CD14-positive monocyte (primary cell): ENCODE measurements at regions of chr5 and their contacts with region 1.

Region 1: GRCh38 chr5:79020861-79021561 is 35.9 kb upstream of the ARSB start:
- DNase-seq: peak; percentile 38 to 50 (median 42)
- H3K4me3 ChIP-seq: no peak overlapping the region
- H3K4me3 Mint-ChIP-seq: peak overlapping the region; percentile 25 to 59
- H3K27ac ChIP-seq: no peak overlapping the region
- H3K27ac Mint-ChIP-seq: peak overlapping the region in 1 of 7 donors; percentile 46
- H3K4me1 ChIP-seq: peaks cover 0 to 3% of the 10 kb centered on the region in 2 donors
- H3K4me1 Mint-ChIP-seq: peaks cover 16% of the 10 kb centered on the region
- H3K27me3 ChIP-seq: peaks cover 10 to 15% of the 10 kb centered on the region in 2 donors
- H3K27me3 Mint-ChIP-seq: peaks cover 7 to 27% (median 7%) of the 10 kb centered on the region in 3 donors
- CTCF ChIP-seq: peak; percentile 74

Region 2: DNA sequence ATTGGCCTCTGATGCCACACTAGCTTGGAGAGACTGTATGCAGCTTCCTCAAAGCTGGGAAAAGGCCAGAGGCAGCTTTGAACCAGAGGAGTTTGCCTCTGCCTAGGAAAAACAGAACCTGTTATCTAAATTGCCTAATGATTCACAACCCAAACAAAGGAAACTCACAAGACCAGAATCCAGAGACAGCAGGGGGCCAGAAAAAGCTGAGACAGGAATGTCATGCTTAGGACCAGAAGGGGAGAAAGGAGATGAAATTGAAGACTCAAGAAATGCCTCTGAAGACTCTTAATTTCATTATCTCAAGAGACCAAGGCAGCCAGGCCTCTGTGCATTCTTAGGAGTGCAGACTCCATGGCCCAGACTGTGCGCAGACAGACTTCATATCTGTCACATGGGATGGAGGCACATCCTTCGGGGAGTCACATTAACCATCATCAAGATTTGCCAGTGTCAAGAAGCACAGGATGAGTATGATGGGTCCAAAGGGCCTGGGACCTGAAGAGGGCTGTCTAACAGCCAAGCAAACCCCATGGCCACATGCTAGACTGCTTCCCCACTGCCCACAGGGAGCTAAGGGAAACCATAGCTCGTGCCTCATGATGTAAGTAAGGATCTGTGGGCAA is 93.2 kb before region 1 on chr5:
- intact Hi-C with region 1: no loop called
- DNase-seq: no peak
- H3K4me3 ChIP-seq: no peak overlapping the region
- H3K4me3 Mint-ChIP-seq: no peak overlapping the region
- H3K27ac ChIP-seq: no peak overlapping the region
- H3K27ac Mint-ChIP-seq: peak overlapping the region in 4 of 7 donors; percentile 24 to 71 (median 40)
- H3K4me1 ChIP-seq: no peaks in the 10 kb centered on the region
- H3K4me1 Mint-ChIP-seq: no peaks in the 10 kb centered on the region
- H3K27me3 ChIP-seq: no peaks in the 10 kb centered on the region
- H3K27me3 Mint-ChIP-seq: peaks cover 0 to 2% (median 0%) of the 10 kb centered on the region in 3 donors
- CTCF ChIP-seq: no peak

Region 3: DNA sequence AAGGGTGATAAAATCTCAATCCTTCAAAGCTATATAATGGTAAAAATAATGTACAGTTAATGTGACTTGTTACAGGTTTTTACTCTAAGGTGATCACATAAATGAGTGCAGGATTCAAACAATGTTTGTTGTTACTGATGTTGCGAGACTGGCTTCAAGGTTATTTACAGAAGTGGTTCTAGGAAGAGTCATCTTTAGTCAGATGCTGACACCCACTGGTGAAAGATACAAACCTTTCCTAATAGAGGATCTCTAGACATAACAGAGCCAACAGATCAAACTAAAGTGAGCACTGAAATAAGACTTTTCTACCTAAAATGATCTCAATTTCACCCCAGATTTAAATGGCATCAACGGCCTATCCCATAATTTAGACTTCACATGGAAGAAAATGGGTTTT is 56.1 kb before region 1 on chr5:
- intact Hi-C with region 1: no loop called
- DNase-seq: peak in 2 of 3 donors; percentile 21 to 24
- H3K4me3 ChIP-seq: no peak overlapping the region
- H3K4me3 Mint-ChIP-seq: no peak overlapping the region
- H3K27ac ChIP-seq: no peak overlapping the region
- H3K27ac Mint-ChIP-seq: no peak overlapping the region
- H3K4me1 ChIP-seq: no peaks in the 10 kb centered on the region
- H3K4me1 Mint-ChIP-seq: no peaks in the 10 kb centered on the region
- H3K27me3 ChIP-seq: no peaks in the 10 kb centered on the region
- H3K27me3 Mint-ChIP-seq: peaks cover 0 to 1% (median 0%) of the 10 kb centered on the region in 3 donors
- CTCF ChIP-seq: no peak

Region 4: GRCh38 chr5:79133657-79134451 is 112.8 kb after region 1 on chr5:
- intact Hi-C with region 1: loop called (anchors 5 kb)
- DNase-seq: peak; percentile 40 to 65 (median 47)
- H3K4me3 ChIP-seq: no peak overlapping the region
- H3K4me3 Mint-ChIP-seq: peak overlapping the region in 1 of 2 donors; percentile 67
- H3K27ac ChIP-seq: no peak overlapping the region
- H3K27ac Mint-ChIP-seq: peak overlapping the region in 2 of 7 donors; percentile 17 to 19
- H3K4me1 ChIP-seq: peaks cover 3 to 10% of the 10 kb centered on the region in 2 donors
- H3K4me1 Mint-ChIP-seq: peaks cover 11% of the 10 kb centered on the region
- H3K27me3 ChIP-seq: no peaks in the 10 kb centered on the region
- H3K27me3 Mint-ChIP-seq: peaks cover 2 to 8% (median 2%) of the 10 kb centered on the region in 3 donors
- CTCF ChIP-seq: peak; percentile 71

Region 5: DNA sequence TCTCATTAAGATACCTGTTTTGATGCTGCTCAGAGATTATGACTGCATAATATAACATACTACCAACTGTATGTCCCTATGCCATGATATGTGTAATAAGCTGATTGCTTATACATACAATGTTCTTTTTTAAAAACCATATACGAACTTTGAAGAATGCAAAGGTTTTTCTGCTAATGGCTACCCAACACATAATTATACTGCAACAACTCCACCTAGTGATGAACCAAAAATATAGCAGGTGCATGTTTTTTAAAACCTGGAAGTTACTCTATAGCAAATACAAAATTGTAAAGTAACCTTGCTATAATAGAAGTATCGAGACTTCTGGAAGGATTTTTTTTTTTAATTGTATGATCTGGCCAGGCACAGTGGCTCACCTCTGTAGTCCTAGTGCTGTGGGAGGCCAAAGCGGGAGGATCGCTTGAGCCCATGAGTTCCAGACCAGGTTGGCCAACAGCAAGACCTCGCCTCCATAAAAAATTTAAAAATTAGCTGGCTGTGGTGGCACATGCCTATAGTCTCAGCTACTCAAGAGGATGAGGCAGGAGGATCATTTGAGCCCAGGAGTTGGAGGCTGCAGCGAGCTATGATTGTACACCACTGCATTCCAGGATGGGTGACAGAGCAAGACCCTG is 443.8 kb after region 1 on chr5:
- intact Hi-C with region 1: loop called in 1 of 2 experiments (anchors 10 kb)
- DNase-seq: no peak
- H3K4me3 ChIP-seq: no peak overlapping the region
- H3K4me3 Mint-ChIP-seq: no peak overlapping the region
- H3K27ac ChIP-seq: no peak overlapping the region
- H3K27ac Mint-ChIP-seq: no peak overlapping the region
- H3K4me1 ChIP-seq: no peaks in the 10 kb centered on the region
- H3K4me1 Mint-ChIP-seq: peaks cover 3% of the 10 kb centered on the region
- H3K27me3 ChIP-seq: no peaks in the 10 kb centered on the region
- H3K27me3 Mint-ChIP-seq: peaks cover 0 to 8% (median 2%) of the 10 kb centered on the region in 3 donors
- CTCF ChIP-seq: peak; percentile 48